HEK293T (cell line): ENCODE measurements at regions of chr1 and their contacts with region 1.

Region 1: DNA sequence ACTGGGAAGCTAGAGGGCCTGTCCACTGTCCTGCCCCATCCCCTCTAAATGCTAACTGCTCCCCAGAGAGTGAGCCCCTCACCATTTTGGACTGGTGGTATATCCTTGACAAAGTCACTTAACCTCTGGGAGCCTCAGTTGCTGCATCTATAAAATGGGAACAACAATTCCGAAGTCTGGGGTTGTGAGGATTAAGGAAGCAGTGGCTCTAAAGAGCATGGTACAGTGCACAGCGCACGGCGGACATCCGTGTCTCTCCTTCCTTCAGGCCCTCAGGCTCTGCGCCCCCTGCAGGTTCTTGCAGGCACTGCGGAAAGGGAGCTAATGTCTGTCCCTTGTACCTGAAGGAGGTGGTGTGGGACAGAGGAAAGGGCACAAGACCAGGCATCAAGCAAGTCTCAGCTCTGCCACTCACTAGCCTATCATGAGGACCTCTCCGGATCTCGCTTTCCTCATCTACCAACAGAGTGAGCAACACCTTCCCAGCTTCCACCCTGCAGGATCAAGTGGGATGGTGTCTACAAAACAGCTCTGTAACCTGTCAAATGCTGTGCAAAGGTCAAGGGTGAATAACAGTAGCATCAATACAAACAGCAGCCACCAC is 20.1 kb downstream of the ECE1 start:
- DNase-seq: peak; percentile 86

Region 2: DNA sequence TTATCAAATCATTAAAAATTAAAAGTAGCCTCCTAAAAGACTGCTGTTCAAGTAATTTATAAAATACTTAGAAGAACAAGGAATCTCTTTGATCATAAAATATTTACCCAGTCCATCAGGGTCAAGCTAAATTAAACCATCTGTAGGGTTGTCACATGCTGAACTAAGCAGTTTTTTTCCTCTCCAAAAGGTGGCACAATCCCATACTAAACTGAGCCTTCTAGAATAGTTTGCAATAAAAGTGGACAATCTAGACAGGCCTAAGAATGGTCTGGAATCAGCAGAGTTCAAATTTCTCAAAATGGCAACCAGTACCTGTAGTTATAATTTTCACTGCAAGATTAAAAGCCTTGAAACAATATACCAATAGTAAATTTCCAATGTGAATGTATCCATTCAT is 288.3 kb before region 1 on chr1:
- CTCF ChIA-PET with region 1: no interaction called
- POLR2A ChIA-PET with region 1: no interaction called
- DNase-seq: no peak

Region 3: DNA sequence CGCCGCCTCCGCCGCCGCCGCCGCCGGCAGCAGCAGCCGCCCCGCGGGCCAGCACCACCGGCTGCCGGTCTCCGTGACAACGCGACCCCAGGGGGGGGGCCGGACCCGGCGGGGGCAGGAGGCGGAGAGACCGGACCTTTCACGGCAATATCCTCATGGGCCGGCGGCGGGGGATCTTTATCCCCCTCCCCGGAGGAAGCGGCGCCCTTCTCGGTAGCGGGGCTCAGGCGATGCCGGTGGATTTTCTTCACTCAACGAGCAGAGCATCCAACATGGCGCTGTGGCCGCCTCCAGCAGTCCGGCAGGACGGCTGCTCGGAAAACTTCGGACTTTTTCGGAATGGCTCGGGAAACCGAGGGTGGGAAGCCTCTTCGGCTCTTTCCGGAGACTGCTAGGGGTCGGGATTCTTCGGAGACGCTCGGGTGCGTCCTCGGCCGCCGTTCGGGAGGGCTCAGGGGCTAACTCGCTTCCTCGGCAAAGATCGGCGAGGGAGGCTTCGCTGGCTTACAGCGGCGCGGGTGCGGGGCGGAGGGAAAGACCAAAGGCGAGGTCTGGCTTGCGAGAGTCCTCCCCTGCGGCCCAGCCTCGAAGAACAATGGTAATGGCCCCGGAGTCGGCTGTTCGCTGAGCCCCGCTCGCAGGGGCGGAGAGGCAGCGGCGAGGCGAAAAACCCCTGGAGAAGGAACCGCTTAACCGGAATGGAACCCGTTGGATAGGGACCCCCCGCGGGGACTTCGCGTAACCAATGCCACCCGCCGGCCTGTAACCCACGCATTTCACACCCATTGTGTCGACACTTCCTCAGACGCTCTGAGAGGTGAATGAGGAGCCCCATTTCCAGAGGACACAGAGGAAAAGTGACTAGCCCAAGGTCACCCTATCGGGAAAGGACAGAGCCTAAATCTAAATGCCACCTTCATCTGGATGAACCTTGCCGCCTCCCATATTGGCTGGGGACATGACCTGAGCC is 93.3 kb before region 1 on chr1 and contains the start of gene EIF4G3:
- CTCF ChIA-PET with region 1: no interaction called
- POLR2A ChIA-PET with region 1: no interaction called
- DNase-seq: peak; percentile 98

Region 4: DNA sequence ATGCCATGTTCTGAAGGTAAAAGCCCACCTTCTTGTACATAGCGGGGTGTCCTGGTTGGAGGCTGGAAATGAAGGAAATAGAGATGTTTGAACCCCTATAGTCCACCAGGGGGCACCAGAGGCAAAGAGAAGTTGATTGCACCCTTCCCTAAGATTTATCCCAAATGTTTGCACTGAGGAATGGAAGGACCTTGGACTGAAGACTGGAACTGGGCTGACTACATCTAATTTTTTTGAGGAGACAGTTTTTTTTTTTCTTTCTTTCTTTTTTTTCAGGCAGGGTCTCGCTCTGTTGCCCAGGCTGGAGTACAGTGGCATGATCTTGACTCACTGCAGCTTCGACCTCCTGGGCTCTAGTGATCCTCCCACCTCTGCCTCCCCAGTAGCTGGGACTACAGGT is 38.1 kb before region 1 on chr1:
- CTCF ChIA-PET with region 1: interaction called, 16 read pairs
- POLR2A ChIA-PET with region 1: no interaction called
- DNase-seq: peak; percentile 76

Region 5: GRCh38 chr1:21255278-21255942 is 14.8 kb before region 1 on chr1:
- CTCF ChIA-PET with region 1: interaction called, 74 read pairs
- POLR2A ChIA-PET with region 1: no interaction called
- DNase-seq: peak; percentile 82

Region 6: DNA sequence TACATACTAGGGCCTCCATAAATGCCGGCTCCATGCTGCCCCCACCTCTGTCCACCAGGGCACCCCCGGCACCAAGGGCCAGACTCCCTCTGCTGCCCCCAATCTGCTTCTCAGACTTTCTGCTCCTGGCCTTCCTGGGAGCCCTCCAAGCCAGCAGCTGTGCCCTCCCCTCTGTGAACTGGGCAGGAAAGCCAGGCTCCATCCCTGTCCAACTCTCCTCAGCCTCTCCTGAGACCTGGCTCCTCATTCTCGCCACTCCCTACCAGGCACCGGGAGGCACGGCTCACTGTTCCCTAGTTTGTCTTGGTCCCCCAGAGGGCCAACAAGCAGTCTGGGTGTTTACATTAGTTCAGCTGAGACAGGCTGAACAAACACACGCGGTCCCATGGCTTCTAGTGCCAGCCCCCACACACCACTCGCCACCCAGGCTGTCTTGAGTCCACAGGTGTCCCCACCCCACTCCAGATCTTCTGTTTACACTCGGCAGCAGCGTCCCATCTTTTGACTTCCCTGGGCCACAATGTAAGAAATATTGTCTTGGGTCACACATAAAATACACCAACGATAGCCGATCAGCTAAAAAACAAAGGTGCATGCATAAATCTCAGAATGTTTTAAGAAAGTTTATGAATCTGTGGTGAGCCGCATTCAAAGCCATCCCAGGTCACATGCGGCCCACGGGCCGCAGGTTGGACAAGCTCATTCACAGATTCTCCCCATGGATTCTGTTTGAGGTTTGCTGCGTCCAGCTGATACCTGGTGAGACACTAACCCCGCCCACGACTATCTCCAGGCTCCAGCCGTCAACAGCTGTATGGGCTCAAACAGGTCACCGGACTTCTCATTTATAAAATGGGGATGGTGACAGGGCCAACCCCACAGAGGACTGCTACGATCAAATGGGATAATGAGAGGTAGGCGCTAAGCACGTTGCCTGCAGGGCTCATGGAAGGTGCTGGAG is 49.5 kb after region 1 on chr1:
- CTCF ChIA-PET with region 1: interaction called, 17 read pairs
- POLR2A ChIA-PET with region 1: no interaction called
- DNase-seq: no peak

Region 7: GRCh38 chr1:21355956-21356355 is 85.8 kb after region 1 on chr1:
- CTCF ChIA-PET with region 1: interaction called, 10 read pairs
- POLR2A ChIA-PET with region 1: no interaction called
- DNase-seq: no peak